ENCODE measurements at regions of chr7 and their contacts with region 1.

Region 1: GRCh38 chr7:154913638-154914312 is 89.1 kb downstream of the PAXIP1 start:
- DNase-seq: peak; percentile 86
- ATAC-seq: peak; percentile 97
- H3K4me3 ChIP-seq: peak overlapping the region in 4 of 5 experiments; percentile 38 to 64 (median 50)
- H3K4me3 Mint-ChIP-seq: peak overlapping the region; percentile 92
- H3K27ac ChIP-seq: no peak overlapping the region
- H3K27ac Mint-ChIP-seq: no peak overlapping the region
- H3K4me1 ChIP-seq: peaks cover 7 to 9% of the 10 kb centered on the region in 2 donors
- H3K4me1 Mint-ChIP-seq: peaks cover 5% of the 10 kb centered on the region
- H3K27me3 ChIP-seq: peaks cover 0 to 20% (median 9%) of the 10 kb centered on the region in 4 experiments
- H3K27me3 Mint-ChIP-seq: peaks cover 45% of the 10 kb centered on the region
- CTCF ChIP-seq: peak; percentile 96

Region 2: DNA sequence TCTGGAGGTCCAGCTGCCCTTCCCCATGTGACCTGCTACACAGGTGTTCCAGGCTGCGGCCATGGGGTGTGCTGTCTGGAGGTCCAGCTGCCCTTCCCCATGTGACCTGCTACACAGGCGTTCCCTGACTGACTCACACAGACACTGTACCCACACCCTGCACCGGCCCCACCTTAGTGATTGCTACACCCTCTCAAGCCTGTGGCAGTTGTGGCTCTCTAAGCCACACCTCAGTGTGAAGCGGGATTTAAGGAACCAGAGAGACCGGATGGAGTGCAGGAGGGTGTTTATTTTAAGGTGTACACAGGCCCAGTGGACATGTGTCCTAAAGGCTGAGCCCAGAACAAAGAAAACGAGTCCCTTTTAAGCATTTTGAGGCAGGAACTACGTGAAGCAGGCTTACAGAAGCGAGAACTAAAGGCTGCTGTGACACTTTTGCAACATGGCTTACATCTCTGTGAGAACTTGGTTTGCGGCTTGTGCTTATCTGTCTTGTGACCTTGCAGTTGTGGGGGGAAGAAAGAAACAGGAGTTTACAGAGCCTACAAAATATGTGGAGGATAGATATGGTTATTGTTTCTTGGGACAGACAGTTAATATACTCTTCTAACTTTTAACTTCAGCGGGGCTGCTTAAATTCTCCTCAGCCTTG is 237.2 kb before region 1 on chr7:
- CTCF ChIA-PET with region 1: no interaction called
- POLR2A ChIA-PET with region 1: no interaction called
- intact Hi-C with region 1: no loop called
- DNase-seq: no peak
- ATAC-seq: no peak
- H3K4me3 ChIP-seq: no peak overlapping the region
- H3K4me3 Mint-ChIP-seq: no peak overlapping the region
- H3K27ac ChIP-seq: no peak overlapping the region
- H3K27ac Mint-ChIP-seq: no peak overlapping the region
- H3K4me1 ChIP-seq: no peaks in the 10 kb centered on the region
- H3K4me1 Mint-ChIP-seq: no peaks in the 10 kb centered on the region
- H3K27me3 ChIP-seq: no peaks in the 10 kb centered on the region
- H3K27me3 Mint-ChIP-seq: no peaks in the 10 kb centered on the region
- CTCF ChIP-seq: no peak

Region 3: GRCh38 chr7:154759989-154760388 is 153.8 kb before region 1 on chr7:
- CTCF ChIA-PET with region 1: no interaction called
- POLR2A ChIA-PET with region 1: no interaction called
- intact Hi-C with region 1: no loop called
- DNase-seq: no peak
- ATAC-seq: no peak
- H3K4me3 ChIP-seq: no peak overlapping the region
- H3K4me3 Mint-ChIP-seq: no peak overlapping the region
- H3K27ac ChIP-seq: no peak overlapping the region
- H3K27ac Mint-ChIP-seq: no peak overlapping the region
- H3K4me1 ChIP-seq: no peaks in the 10 kb centered on the region
- H3K4me1 Mint-ChIP-seq: no peaks in the 10 kb centered on the region
- H3K27me3 ChIP-seq: no peaks in the 10 kb centered on the region
- H3K27me3 Mint-ChIP-seq: no peaks in the 10 kb centered on the region
- CTCF ChIP-seq: no peak

Region 4: DNA sequence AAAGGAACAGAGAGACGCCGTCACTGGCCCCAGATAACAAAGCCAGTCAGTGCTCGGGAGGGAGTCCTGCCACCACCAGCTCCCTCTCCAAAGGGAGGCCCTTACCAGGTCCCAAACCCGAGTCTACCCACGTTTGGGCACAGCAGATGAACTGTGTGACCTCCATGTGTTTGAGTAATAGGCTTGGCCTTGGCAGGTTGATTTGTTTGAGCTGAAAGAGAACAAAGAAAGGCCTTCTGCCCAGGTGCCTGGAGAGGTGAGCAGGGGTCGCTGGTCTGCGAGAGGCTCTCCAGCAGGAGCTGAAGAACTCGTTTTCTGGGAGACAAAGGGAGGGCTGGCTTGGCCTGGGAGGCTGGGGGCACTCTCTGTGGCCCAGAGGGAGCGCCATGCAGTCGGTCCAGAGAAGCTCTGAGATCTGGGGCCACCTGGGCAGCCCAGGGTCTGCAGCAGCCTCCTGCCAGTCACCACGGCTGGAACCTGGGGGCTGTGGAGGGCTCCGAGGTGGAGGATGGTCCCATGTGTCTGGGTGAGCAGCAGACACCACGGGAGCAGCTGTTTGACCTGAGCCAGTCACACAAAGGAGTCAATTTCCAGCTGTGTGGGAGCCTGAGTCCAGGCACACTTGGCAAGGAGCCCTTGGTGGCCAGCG is 10.6 kb before region 1 on chr7:
- CTCF ChIA-PET with region 1: interaction called, 16 read pairs
- POLR2A ChIA-PET with region 1: no interaction called
- intact Hi-C with region 1: no loop called
- DNase-seq: no peak
- ATAC-seq: no peak
- H3K4me3 ChIP-seq: no peak overlapping the region
- H3K4me3 Mint-ChIP-seq: no peak overlapping the region
- H3K27ac ChIP-seq: no peak overlapping the region
- H3K27ac Mint-ChIP-seq: no peak overlapping the region
- H3K4me1 ChIP-seq: no peaks in the 10 kb centered on the region
- H3K4me1 Mint-ChIP-seq: peaks cover 3% of the 10 kb centered on the region
- H3K27me3 ChIP-seq: no peaks in the 10 kb centered on the region
- H3K27me3 Mint-ChIP-seq: peaks cover 8% of the 10 kb centered on the region
- CTCF ChIP-seq: no peak

Region 5: GRCh38 chr7:154953006-154953684 is 39.4 kb after region 1 on chr7:
- CTCF ChIA-PET with region 1: interaction called, 21 read pairs
- POLR2A ChIA-PET with region 1: no interaction called
- intact Hi-C with region 1: no loop called
- DNase-seq: peak; percentile 62
- ATAC-seq: no peak
- H3K4me3 ChIP-seq: no peak overlapping the region
- H3K4me3 Mint-ChIP-seq: no peak overlapping the region
- H3K27ac ChIP-seq: no peak overlapping the region
- H3K27ac Mint-ChIP-seq: no peak overlapping the region
- H3K4me1 ChIP-seq: no peaks in the 10 kb centered on the region
- H3K4me1 Mint-ChIP-seq: no peaks in the 10 kb centered on the region
- H3K27me3 ChIP-seq: no peaks in the 10 kb centered on the region
- H3K27me3 Mint-ChIP-seq: no peaks in the 10 kb centered on the region
- CTCF ChIP-seq: peak; percentile 69

Region 6: DNA sequence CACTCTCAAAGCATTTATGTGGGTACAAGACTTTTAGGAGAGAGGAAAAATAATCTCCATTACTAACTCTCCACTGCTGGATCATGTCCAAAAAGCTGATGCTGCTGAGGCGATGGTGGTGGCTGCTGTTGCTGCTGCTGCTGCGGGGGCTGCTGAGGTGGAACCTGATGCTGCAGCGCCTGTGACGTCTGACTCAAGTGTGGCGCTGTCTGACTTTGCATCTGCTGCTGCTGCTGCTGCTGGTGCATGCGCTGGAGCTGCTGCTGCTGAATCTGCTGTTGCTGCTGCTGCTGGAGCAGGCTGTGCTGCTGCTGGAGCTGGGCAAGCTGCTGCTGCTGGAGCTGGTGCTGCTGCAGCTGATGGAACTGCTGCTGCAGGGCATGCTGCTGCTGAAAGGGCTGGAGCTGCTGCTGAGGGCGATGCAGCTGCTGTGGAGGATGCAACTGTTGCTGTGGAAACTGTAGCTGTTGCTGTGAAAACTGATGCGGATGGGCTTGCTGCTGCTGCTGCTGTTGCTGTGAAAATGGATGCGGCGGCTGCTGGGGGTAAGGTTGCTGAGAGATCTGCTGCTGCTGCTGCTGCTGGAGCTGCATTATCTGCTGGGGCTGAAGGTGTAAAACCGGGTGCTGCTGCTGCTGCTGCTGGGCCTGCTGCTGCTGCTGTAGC is 54.7 kb after region 1 on chr7:
- CTCF ChIA-PET with region 1: no interaction called
- POLR2A ChIA-PET with region 1: no interaction called
- intact Hi-C with region 1: no loop called
- DNase-seq: no peak
- ATAC-seq: no peak
- H3K4me3 ChIP-seq: no peak overlapping the region
- H3K4me3 Mint-ChIP-seq: no peak overlapping the region
- H3K27ac ChIP-seq: no peak overlapping the region
- H3K27ac Mint-ChIP-seq: no peak overlapping the region
- H3K4me1 ChIP-seq: no peaks in the 10 kb centered on the region
- H3K4me1 Mint-ChIP-seq: no peaks in the 10 kb centered on the region
- H3K27me3 ChIP-seq: no peaks in the 10 kb centered on the region
- H3K27me3 Mint-ChIP-seq: no peaks in the 10 kb centered on the region
- CTCF ChIP-seq: no peak

Region 7: DNA sequence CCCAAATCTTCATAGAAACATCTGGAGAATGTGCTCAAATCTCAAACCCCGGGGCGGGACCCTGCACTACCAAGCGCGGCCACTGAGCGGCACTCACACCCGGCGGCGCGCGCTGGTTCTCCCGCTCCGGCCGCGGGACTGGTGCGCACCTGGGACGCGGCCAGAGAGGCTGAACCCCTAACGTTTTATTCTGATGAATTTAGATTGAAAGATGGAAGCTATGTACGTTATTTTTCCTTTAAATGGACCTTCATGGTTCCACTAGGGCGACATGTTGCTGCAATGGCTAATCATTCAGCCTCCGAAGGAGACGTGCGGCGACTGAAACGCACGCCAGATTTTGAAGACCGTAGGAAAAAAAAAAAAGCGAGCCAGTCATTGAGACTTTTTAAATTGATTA is 276.9 kb after region 1 on chr7:
- CTCF ChIA-PET with region 1: interaction called, 4 read pairs
- POLR2A ChIA-PET with region 1: no interaction called
- intact Hi-C with region 1: loop called (anchors 1 kb)
- DNase-seq: peak; percentile 68
- ATAC-seq: peak; percentile 85
- H3K4me3 ChIP-seq: no peak overlapping the region
- H3K4me3 Mint-ChIP-seq: no peak overlapping the region
- H3K27ac ChIP-seq: no peak overlapping the region
- H3K27ac Mint-ChIP-seq: no peak overlapping the region
- H3K4me1 ChIP-seq: peaks cover 4 to 5% of the 10 kb centered on the region in 2 donors
- H3K4me1 Mint-ChIP-seq: peaks cover 2% of the 10 kb centered on the region
- H3K27me3 ChIP-seq: peaks cover 0 to 4% (median 2%) of the 10 kb centered on the region in 4 experiments
- H3K27me3 Mint-ChIP-seq: peaks cover 10% of the 10 kb centered on the region
- CTCF ChIP-seq: peak; percentile 86

Region 8: GRCh38 chr7:155344600-155345433 is 431.0 kb after region 1 on chr7:
- CTCF ChIA-PET with region 1: interaction called, 36 read pairs
- POLR2A ChIA-PET with region 1: no interaction called
- intact Hi-C with region 1: loop called (anchors 1 kb)
- DNase-seq: peak; percentile 88
- ATAC-seq: peak; percentile 91
- H3K4me3 ChIP-seq: peak overlapping the region in 4 of 5 experiments; percentile 25 to 58 (median 52)
- H3K4me3 Mint-ChIP-seq: peak overlapping the region; percentile 82
- H3K27ac ChIP-seq: no peak overlapping the region
- H3K27ac Mint-ChIP-seq: peak overlapping the region; percentile 71
- H3K4me1 ChIP-seq: peaks cover 12 to 13% of the 10 kb centered on the region in 2 donors
- H3K4me1 Mint-ChIP-seq: peaks cover 5% of the 10 kb centered on the region
- H3K27me3 ChIP-seq: peaks cover 0 to 26% (median 6%) of the 10 kb centered on the region in 4 experiments
- H3K27me3 Mint-ChIP-seq: peaks cover 4% of the 10 kb centered on the region
- CTCF ChIP-seq: peak; percentile 89

Region 9: GRCh38 chr7:155769701-155770100 is 855.9 kb after region 1 on chr7:
- CTCF ChIA-PET with region 1: interaction called, 8 read pairs
- POLR2A ChIA-PET with region 1: no interaction called
- intact Hi-C with region 1: loop called (anchors 2 kb)
- DNase-seq: no peak
- ATAC-seq: no peak
- H3K4me3 ChIP-seq: no peak overlapping the region
- H3K4me3 Mint-ChIP-seq: no peak overlapping the region
- H3K27ac ChIP-seq: no peak overlapping the region
- H3K27ac Mint-ChIP-seq: no peak overlapping the region
- H3K4me1 ChIP-seq: peaks cover 0 to 2% of the 10 kb centered on the region in 2 donors
- H3K4me1 Mint-ChIP-seq: peaks cover 3% of the 10 kb centered on the region
- H3K27me3 ChIP-seq: no peaks in the 10 kb centered on the region
- H3K27me3 Mint-ChIP-seq: no peaks in the 10 kb centered on the region
- CTCF ChIP-seq: no peak

Measured in B cell (primary cell).